ENCODE measurements at regions of chr11 and their contacts with region 1.

Region 1: GRCh38 chr11:67288452-67289225 is 464 bp upstream of the ANKRD13D start:
- DNase-seq: peak; percentile 95
- ATAC-seq: peak; percentile 76
- H3K4me3 ChIP-seq: peak overlapping the region; percentile 31 to 86 (median 79)
- H3K4me3 Mint-ChIP-seq: peak overlapping the region; percentile 76
- H3K27ac ChIP-seq: peak overlapping the region; percentile 86 to 92
- H3K27ac Mint-ChIP-seq: peak overlapping the region; percentile 97
- H3K4me1 ChIP-seq: peaks cover 44 to 55% of the 10 kb centered on the region in 2 donors
- H3K4me1 Mint-ChIP-seq: peaks cover 45% of the 10 kb centered on the region
- H3K27me3 ChIP-seq: no peaks in the 10 kb centered on the region
- H3K27me3 Mint-ChIP-seq: no peaks in the 10 kb centered on the region
- CTCF ChIP-seq: peak; percentile 61

Region 2: GRCh38 chr11:67277231-67277961 is 11.2 kb before region 1 on chr11:
- CTCF ChIA-PET with region 1: interaction called, 25 read pairs
- POLR2A ChIA-PET with region 1: interaction called, 131 read pairs
- intact Hi-C with region 1: loop called (anchors 1 kb)
- DNase-seq: peak; percentile 96
- ATAC-seq: peak; percentile 95
- H3K4me3 ChIP-seq: peak overlapping the region; percentile 35 to 59 (median 50)
- H3K4me3 Mint-ChIP-seq: peak overlapping the region; percentile 84
- H3K27ac ChIP-seq: peak overlapping the region; percentile 82
- H3K27ac Mint-ChIP-seq: peak overlapping the region; percentile 95
- H3K4me1 ChIP-seq: peaks cover 82 to 86% of the 10 kb centered on the region in 2 donors
- H3K4me1 Mint-ChIP-seq: peaks cover 76% of the 10 kb centered on the region
- H3K27me3 ChIP-seq: no peaks in the 10 kb centered on the region
- H3K27me3 Mint-ChIP-seq: no peaks in the 10 kb centered on the region
- CTCF ChIP-seq: no peak

Region 3: GRCh38 chr11:67303132-67303834 is 14.6 kb after region 1 on chr11 and contains the start of gene SSH3:
- CTCF ChIA-PET with region 1: no interaction called
- POLR2A ChIA-PET with region 1: interaction called, 10 read pairs
- intact Hi-C with region 1: no loop called
- DNase-seq: no peak
- ATAC-seq: peak; percentile 88
- H3K4me3 ChIP-seq: peak within 1 kb of the TSS in 3 of 5 experiments; percentile 38 to 56 (median 44)
- H3K4me3 Mint-ChIP-seq: peak within 1 kb of the TSS; percentile 37
- H3K27ac ChIP-seq: no peak within 1 kb of the TSS
- H3K27ac Mint-ChIP-seq: no peak within 1 kb of the TSS
- H3K4me1 ChIP-seq: peaks cover 3 to 4% of the 10 kb centered on the region in 2 donors
- H3K4me1 Mint-ChIP-seq: peaks cover 3% of the 10 kb centered on the region
- H3K27me3 ChIP-seq: no peaks in the 10 kb centered on the region
- H3K27me3 Mint-ChIP-seq: no peaks in the 10 kb centered on the region
- CTCF ChIP-seq: no peak
- total RNA-seq, gene SSH3: 7.2 and 8.5 TPM in 2 replicates

Region 4: DNA sequence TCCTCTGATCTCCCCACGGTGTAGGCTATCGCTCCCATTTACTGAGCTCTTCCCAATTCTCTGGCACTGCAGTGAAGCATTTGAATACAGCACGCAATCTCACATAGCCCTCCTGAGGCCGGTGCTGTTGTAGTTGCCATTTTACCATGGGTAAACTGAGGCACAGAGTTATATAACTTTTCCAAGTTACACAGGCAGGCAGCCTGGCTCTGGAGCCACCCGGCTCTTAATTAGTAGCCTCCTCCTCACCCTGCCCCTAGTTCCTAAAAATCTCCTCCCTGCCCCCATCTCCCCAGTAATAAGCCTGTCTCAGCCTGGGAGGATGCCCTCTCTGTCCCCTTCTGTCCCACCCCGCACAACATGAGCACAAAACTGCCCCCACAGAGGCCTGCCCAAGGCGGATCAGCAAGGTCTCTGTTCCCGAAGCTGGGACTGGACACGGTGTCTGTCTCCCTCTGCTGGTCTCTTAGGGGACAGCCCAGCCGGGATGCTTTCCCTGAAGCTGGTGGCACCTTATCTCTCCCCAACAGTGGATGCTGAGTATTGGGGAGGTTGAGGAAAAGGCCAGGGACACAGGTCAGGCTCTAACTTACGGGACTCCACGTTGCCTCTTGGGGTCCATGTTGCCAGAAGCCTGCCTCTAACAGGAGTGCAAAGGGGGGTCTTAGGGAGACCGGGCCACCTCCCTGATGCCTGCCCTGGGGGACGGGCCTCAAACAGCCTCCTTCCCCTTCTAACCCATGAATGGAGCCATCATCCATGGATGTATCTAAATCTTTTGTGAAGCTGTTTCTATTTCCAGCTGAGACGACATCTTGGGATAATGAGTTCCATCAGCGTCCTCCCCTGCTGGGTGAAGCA is 93.9 kb after region 1 on chr11:
- CTCF ChIA-PET with region 1: interaction called, 14 read pairs
- POLR2A ChIA-PET with region 1: no interaction called
- intact Hi-C with region 1: loop called (anchors 5 kb)
- DNase-seq: peak; percentile 88
- ATAC-seq: peak; percentile 86
- H3K4me3 ChIP-seq: no peak overlapping the region
- H3K4me3 Mint-ChIP-seq: peak overlapping the region; percentile 84
- H3K27ac ChIP-seq: peak overlapping the region in 1 of 2 donors; percentile 88
- H3K27ac Mint-ChIP-seq: peak overlapping the region; percentile 92
- H3K4me1 ChIP-seq: peaks cover 22 to 33% of the 10 kb centered on the region in 2 donors
- H3K4me1 Mint-ChIP-seq: peaks cover 22% of the 10 kb centered on the region
- H3K27me3 ChIP-seq: no peaks in the 10 kb centered on the region
- H3K27me3 Mint-ChIP-seq: no peaks in the 10 kb centered on the region
- CTCF ChIP-seq: peak; percentile 96

Measured in B cell (primary cell).